HepG2 (cell line): ENCODE measurements at regions of chr13 and their contacts with region 1.

Region 1: GRCh38 chr13:36275190-36276002 is 22.2 kb downstream of the CCDC169 start:
- DNase-seq: peak; percentile 50
- ATAC-seq: peak; percentile 63
- H3K4me3 ChIP-seq: no peak overlapping the region
- H3K27ac ChIP-seq: no peak overlapping the region
- H3K4me1 ChIP-seq: no peaks in the 10 kb centered on the region
- H3K27me3 ChIP-seq: no peaks in the 10 kb centered on the region
- CTCF ChIP-seq: peak; percentile 46
- EP300 ChIP-seq: no peak
- POLR2A ChIP-seq: no peak
- RAD21 ChIP-seq: no peak

Region 2: GRCh38 chr13:35978603-35979316 is 296.6 kb before region 1 on chr13:
- CTCF ChIA-PET with region 1: interaction called, 31 read pairs
- POLR2A ChIA-PET with region 1: no interaction called
- in situ Hi-C with region 1: loop called (anchors 5 kb)
- intact Hi-C with region 1: loop called (anchors 1 kb)
- DNase-seq: peak; percentile 42
- ATAC-seq: peak; percentile 41; the same call in 1 of the 3 replicates
- H3K4me3 ChIP-seq: no peak overlapping the region
- H3K27ac ChIP-seq: no peak overlapping the region
- H3K4me1 ChIP-seq: no peaks in the 10 kb centered on the region
- H3K27me3 ChIP-seq: no peaks in the 10 kb centered on the region; a peak in 1 of 5 replicates
- CTCF ChIP-seq: peak; percentile 72
- EP300 ChIP-seq: no peak
- POLR2A ChIP-seq: no peak
- RAD21 ChIP-seq: peak; percentile 61; the same call in 1 of the 2 replicates